CD4-positive, alpha-beta T cell (primary cell): ENCODE measurements at regions of chr2 and their contacts with region 1.

Region 1: GRCh38 chr2:170815746-170816503 is 762 bp upstream of the GAD1 start:
- DNase-seq: peak; percentile 36 to 82 (median 54)
- ATAC-seq: peak; percentile 65
- H3K4me3 ChIP-seq: peak overlapping the region; percentile 39
- H3K4me3 Mint-ChIP-seq: peak overlapping the region; percentile 84
- H3K27ac ChIP-seq: no peak overlapping the region
- H3K27ac Mint-ChIP-seq: no peak overlapping the region
- H3K4me1 ChIP-seq: peaks cover 70% of the 10 kb centered on the region
- H3K4me1 Mint-ChIP-seq: peaks cover 52% of the 10 kb centered on the region
- H3K27me3 ChIP-seq: peaks cover 76 to 79% of the 10 kb centered on the region in 2 experiments
- H3K27me3 Mint-ChIP-seq: peaks cover 91% of the 10 kb centered on the region
- CTCF ChIP-seq: peak; percentile 86

Region 2: DNA sequence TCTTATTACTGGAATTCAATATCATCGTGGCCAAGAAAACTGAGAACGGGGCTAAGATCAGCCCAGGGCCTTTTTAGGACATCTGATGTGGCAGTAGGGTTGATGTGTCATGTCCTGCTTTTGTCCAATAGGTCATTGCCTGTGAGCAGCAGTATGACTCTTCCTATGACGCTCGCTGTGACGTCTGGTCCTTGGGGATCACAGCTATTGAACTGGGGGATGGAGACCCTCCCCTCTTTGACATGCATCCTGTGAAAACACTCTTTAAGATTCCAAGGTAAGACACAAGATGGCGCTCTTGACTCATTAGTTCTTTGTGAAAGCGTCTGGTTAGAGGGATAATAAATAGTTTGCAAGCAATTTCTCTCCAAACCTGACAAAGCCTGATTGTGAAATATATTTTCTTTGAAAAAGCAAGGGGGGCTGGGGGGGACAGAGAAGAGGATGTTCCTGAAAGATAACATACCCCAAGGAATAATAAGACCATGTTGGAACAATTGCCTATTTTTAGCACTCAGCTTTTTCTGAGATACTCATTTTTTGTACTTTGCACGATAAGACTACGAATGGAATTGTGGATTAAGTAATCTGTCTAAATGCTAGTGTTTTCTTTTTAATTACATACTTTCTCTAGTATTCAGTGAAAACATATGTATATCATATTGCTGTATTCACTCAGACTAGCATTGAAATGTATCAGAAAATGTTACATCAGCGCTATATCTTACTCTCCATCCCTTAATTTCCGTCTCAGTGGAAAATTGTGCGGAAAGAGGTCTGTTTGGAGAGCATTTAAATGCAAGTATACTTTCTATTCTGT is 579.9 kb before region 1 on chr2:
- CTCF ChIA-PET with region 1: no interaction called
- POLR2A ChIA-PET with region 1: no interaction called
- intact Hi-C with region 1: loop called (anchors 5 to 10 kb)
- DNase-seq: peak in 3 of 14 experiments; percentile 3 to 28 (median 19)
- ATAC-seq: no peak
- H3K4me3 ChIP-seq: no peak overlapping the region
- H3K4me3 Mint-ChIP-seq: no peak overlapping the region
- H3K27ac ChIP-seq: no peak overlapping the region
- H3K27ac Mint-ChIP-seq: no peak overlapping the region
- H3K4me1 ChIP-seq: no peaks in the 10 kb centered on the region
- H3K4me1 Mint-ChIP-seq: no peaks in the 10 kb centered on the region
- H3K27me3 ChIP-seq: no peaks in the 10 kb centered on the region
- H3K27me3 Mint-ChIP-seq: peaks cover 21% of the 10 kb centered on the region
- CTCF ChIP-seq: no peak

Region 3: GRCh38 chr2:170361090-170361936 is 454.6 kb before region 1 on chr2:
- CTCF ChIA-PET with region 1: interaction called, 8 read pairs
- POLR2A ChIA-PET with region 1: interaction called, 5 read pairs
- intact Hi-C with region 1: loop called (anchors 1 to 2 kb)
- DNase-seq: peak; percentile 10 to 74 (median 30)
- ATAC-seq: peak; percentile 82
- H3K4me3 ChIP-seq: no peak overlapping the region
- H3K4me3 Mint-ChIP-seq: no peak overlapping the region
- H3K27ac ChIP-seq: no peak overlapping the region
- H3K27ac Mint-ChIP-seq: no peak overlapping the region
- H3K4me1 ChIP-seq: peaks cover 3% of the 10 kb centered on the region
- H3K4me1 Mint-ChIP-seq: peaks cover 16% of the 10 kb centered on the region
- H3K27me3 ChIP-seq: peaks cover 4 to 12% of the 10 kb centered on the region in 2 experiments
- H3K27me3 Mint-ChIP-seq: peaks cover 6% of the 10 kb centered on the region
- CTCF ChIP-seq: peak; percentile 75

Region 4: GRCh38 chr2:170409164-170409535 is 406.8 kb before region 1 on chr2:
- CTCF ChIA-PET with region 1: interaction called, 5 read pairs
- POLR2A ChIA-PET with region 1: no interaction called
- intact Hi-C with region 1: loop called (anchors 1 kb)
- DNase-seq: peak; percentile 50 to 85 (median 70)
- ATAC-seq: peak; percentile 63
- H3K4me3 ChIP-seq: no peak overlapping the region
- H3K4me3 Mint-ChIP-seq: peak overlapping the region; percentile 34
- H3K27ac ChIP-seq: no peak overlapping the region
- H3K27ac Mint-ChIP-seq: no peak overlapping the region
- H3K4me1 ChIP-seq: peaks cover 6% of the 10 kb centered on the region
- H3K4me1 Mint-ChIP-seq: peaks cover 15% of the 10 kb centered on the region
- H3K27me3 ChIP-seq: peaks cover 8 to 30% of the 10 kb centered on the region in 2 experiments
- H3K27me3 Mint-ChIP-seq: peaks cover 44% of the 10 kb centered on the region
- CTCF ChIP-seq: peak; percentile 87

Region 5: GRCh38 chr2:170715062-170715931 is 100.6 kb before region 1 on chr2 and contains the start of gene SP5:
- CTCF ChIA-PET with region 1: no interaction called
- POLR2A ChIA-PET with region 1: no interaction called
- intact Hi-C with region 1: loop called in 1 of 2 experiments (anchors 2 kb)
- DNase-seq: peak in 6 of 14 experiments; percentile 18 to 68 (median 52)
- ATAC-seq: peak; percentile 54
- H3K4me3 ChIP-seq: peak within 1 kb of the TSS; percentile 59
- H3K4me3 Mint-ChIP-seq: peak within 1 kb of the TSS; percentile 83
- H3K27ac ChIP-seq: no peak within 1 kb of the TSS
- H3K27ac Mint-ChIP-seq: no peak within 1 kb of the TSS
- H3K4me1 ChIP-seq: peaks cover 65% of the 10 kb centered on the region
- H3K4me1 Mint-ChIP-seq: peaks cover 51% of the 10 kb centered on the region
- H3K27me3 ChIP-seq: peaks cover 62 to 92% of the 10 kb centered on the region in 2 experiments
- H3K27me3 Mint-ChIP-seq: peaks cover 79% of the 10 kb centered on the region
- CTCF ChIP-seq: no peak
- total RNA-seq, gene SP5: not detected